ENCODE measurements at regions of chr11 and their contacts with region 1.

Region 1: GRCh38 chr11:134223836-134224709 is at the starts of genes NCAPD3 and VPS26B:
- DNase-seq: peak; percentile 98
- H3K4me3 ChIP-seq: peak within 1 kb of the TSS; percentile 69 to 94 (median 82)
- H3K27ac ChIP-seq: peak within 1 kb of the TSS; percentile 95 to 97 (median 96)
- H3K4me1 ChIP-seq: peaks cover 0 to 42% (median 32%) of the 10 kb centered on the region in 4 donors
- H3K27me3 ChIP-seq: no peaks in the 10 kb centered on the region
- CTCF ChIP-seq: no peak
- EP300 ChIP-seq: peak in 1 of 4 donors; percentile 21
- POLR2A ChIP-seq: peak; percentile 98 to 99
- total RNA-seq, gene NCAPD3: 6.4 to 8.9 (median 8.0) TPM
- total RNA-seq, gene VPS26B: 35.7 to 53.7 (median 37.3) TPM

Region 2: GRCh38 chr11:134181707-134182106 is 42.4 kb before region 1 on chr11:
- intact Hi-C with region 1: no loop called
- DNase-seq: no peak
- H3K4me3 ChIP-seq: no peak overlapping the region
- H3K27ac ChIP-seq: no peak overlapping the region
- H3K4me1 ChIP-seq: no peaks in the 10 kb centered on the region
- H3K27me3 ChIP-seq: no peaks in the 10 kb centered on the region
- CTCF ChIP-seq: no peak
- EP300 ChIP-seq: no peak
- POLR2A ChIP-seq: no peak

Region 3: GRCh38 chr11:134253188-134253993 is 29.3 kb after region 1 on chr11 and contains the starts of genes ACAD8 and THYN1:
- intact Hi-C with region 1: loop called (anchors 1 kb)
- DNase-seq: peak; percentile 99
- H3K4me3 ChIP-seq: peak within 1 kb of the TSS; percentile 66 to 97 (median 84)
- H3K27ac ChIP-seq: peak within 1 kb of the TSS; percentile 76 to 82 (median 77)
- H3K4me1 ChIP-seq: peaks cover 0 to 30% (median 21%) of the 10 kb centered on the region in 4 donors
- H3K27me3 ChIP-seq: no peaks in the 10 kb centered on the region
- CTCF ChIP-seq: peak; percentile 21 to 65 (median 24)
- EP300 ChIP-seq: no peak
- POLR2A ChIP-seq: peak; percentile 68 to 83
- total RNA-seq, gene ACAD8: 25.5 to 30.1 (median 26.9) TPM
- total RNA-seq, gene THYN1: 69.9 to 92.2 (median 74.4) TPM

Region 4: DNA sequence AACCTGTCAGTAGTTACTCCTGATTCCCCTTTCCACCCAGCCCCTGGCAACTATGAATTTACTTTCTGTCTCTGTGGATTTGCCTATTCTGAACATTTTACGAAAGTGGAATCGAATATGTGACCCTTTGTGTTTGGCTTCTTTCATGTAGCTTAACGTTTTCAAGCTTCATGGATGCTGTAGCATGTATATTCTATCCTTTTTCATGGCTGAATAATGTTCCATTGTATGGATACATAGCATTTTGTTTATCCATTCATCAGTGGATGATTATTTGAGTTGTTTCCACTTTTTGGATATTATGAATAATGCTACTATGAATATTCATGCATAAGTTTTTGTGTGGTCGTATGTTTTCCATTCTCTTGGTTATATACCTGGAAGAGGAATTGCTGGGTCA is 98.5 kb after region 1 on chr11:
- intact Hi-C with region 1: no loop called
- DNase-seq: no peak
- H3K4me3 ChIP-seq: no peak overlapping the region
- H3K27ac ChIP-seq: no peak overlapping the region
- H3K4me1 ChIP-seq: peaks cover 0 to 8% (median 0%) of the 10 kb centered on the region in 4 donors
- H3K27me3 ChIP-seq: no peaks in the 10 kb centered on the region
- CTCF ChIP-seq: no peak
- EP300 ChIP-seq: no peak
- POLR2A ChIP-seq: no peak

Region 5: DNA sequence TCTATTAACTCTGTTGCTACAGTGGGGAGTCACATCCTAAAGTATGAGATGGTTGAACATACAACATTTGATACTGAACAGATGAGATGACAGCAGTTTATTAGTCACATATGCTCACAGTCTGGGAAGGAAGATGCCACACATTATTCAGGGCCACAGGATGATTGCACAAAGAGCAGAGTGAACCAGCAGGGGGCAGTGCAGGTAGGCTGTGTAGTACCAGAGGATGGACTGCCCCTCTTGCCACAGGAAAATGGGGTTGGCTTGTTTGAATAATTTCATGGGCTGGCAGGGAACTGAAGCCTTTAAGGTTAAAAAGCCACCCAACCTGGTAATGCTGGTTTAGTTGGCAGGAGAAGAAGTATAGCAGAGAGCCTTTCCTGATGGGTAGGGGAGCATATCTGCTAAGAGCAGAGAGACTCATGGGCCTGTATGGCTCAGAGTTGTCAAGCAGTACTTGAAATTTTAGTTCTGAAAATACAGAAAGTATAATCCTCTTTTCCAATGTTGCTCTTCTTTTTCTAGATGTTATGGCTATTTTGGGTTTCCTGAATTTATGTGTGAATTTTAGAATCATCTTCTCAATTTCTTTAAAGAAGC is 368.4 kb after region 1 on chr11:
- intact Hi-C with region 1: no loop called
- DNase-seq: no peak
- H3K4me3 ChIP-seq: no peak overlapping the region
- H3K27ac ChIP-seq: no peak overlapping the region
- H3K4me1 ChIP-seq: no peaks in the 10 kb centered on the region
- H3K27me3 ChIP-seq: peaks cover 0 to 6% (median 0%) of the 10 kb centered on the region in 3 donors
- CTCF ChIP-seq: no peak
- EP300 ChIP-seq: no peak
- POLR2A ChIP-seq: no peak